WTC11 (cell line): ENCODE measurements at regions of chr7 and their contacts with region 1.

Region 1: GRCh38 chr7:142782922-142783900 is 12.4 kb downstream of the PRSS2 start:
- DNase-seq: peak; percentile 91
- ATAC-seq: peak; percentile 82
- H3K4me3 Mint-ChIP-seq: peak overlapping the region; percentile 66
- H3K27ac Mint-ChIP-seq: no peak overlapping the region
- H3K4me1 Mint-ChIP-seq: peaks cover 7% of the 10 kb centered on the region
- H3K27me3 Mint-ChIP-seq: 0 out of 2 replicates have a peak, but pooled peaks cover 6% of the 10 kb centered on the region
- CTCF ChIP-seq: peak; percentile 93

Region 2: GRCh38 chr7:142535123-142535779 is 248.0 kb before region 1 on chr7:
- CTCF ChIA-PET with region 1: interaction called, 25 read pairs
- POLR2A ChIA-PET with region 1: interaction called, 3 read pairs
- DNase-seq: peak; percentile 86
- ATAC-seq: peak; percentile 100
- H3K4me3 Mint-ChIP-seq: peak overlapping the region; percentile 42; the same call in 1 of the 2 replicates
- H3K27ac Mint-ChIP-seq: 0 out of 2 replicates have a peak overlapping the region, but pooled peaks have one; percentile 42
- H3K4me1 Mint-ChIP-seq: peaks cover 4% of the 10 kb centered on the region
- H3K27me3 Mint-ChIP-seq: peaks cover 5% of the 10 kb centered on the region; the same call in 1 of the 2 replicates
- CTCF ChIP-seq: peak; percentile 70

Region 3: GRCh38 chr7:142632291-142633134 is 150.7 kb before region 1 on chr7:
- CTCF ChIA-PET with region 1: interaction called, 174 read pairs
- POLR2A ChIA-PET with region 1: interaction called, 4 read pairs
- DNase-seq: peak; percentile 71
- ATAC-seq: peak; percentile 98
- H3K4me3 Mint-ChIP-seq: no peak overlapping the region
- H3K27ac Mint-ChIP-seq: no peak overlapping the region
- H3K4me1 Mint-ChIP-seq: peaks cover 2% of the 10 kb centered on the region; the same call in 1 of the 2 replicates
- H3K27me3 Mint-ChIP-seq: peaks cover 13% of the 10 kb centered on the region
- CTCF ChIP-seq: peak; percentile 63

Region 4: GRCh38 chr7:142669074-142669654 is 114.0 kb before region 1 on chr7:
- CTCF ChIA-PET with region 1: interaction called, 26 read pairs
- POLR2A ChIA-PET with region 1: no interaction called
- DNase-seq: no peak
- ATAC-seq: peak; percentile 65; the same call in 1 of the 2 replicates
- H3K4me3 Mint-ChIP-seq: no peak overlapping the region
- H3K27ac Mint-ChIP-seq: no peak overlapping the region
- H3K4me1 Mint-ChIP-seq: no peaks in the 10 kb centered on the region
- H3K27me3 Mint-ChIP-seq: no peaks in the 10 kb centered on the region
- CTCF ChIP-seq: peak; percentile 33; the same call in 1 of the 2 replicates

Region 5: GRCh38 chr7:142796608-142797385 is 13.6 kb after region 1 on chr7:
- CTCF ChIA-PET with region 1: interaction called, 36 read pairs
- POLR2A ChIA-PET with region 1: interaction called, 3 read pairs
- DNase-seq: peak; percentile 36
- ATAC-seq: peak; percentile 38
- H3K4me3 Mint-ChIP-seq: peak overlapping the region; percentile 86
- H3K27ac Mint-ChIP-seq: no peak overlapping the region
- H3K4me1 Mint-ChIP-seq: peaks cover 56% of the 10 kb centered on the region
- H3K27me3 Mint-ChIP-seq: peaks cover 82% of the 10 kb centered on the region
- CTCF ChIP-seq: no peak

Region 6: GRCh38 chr7:142866361-142867058 is 83.3 kb after region 1 on chr7:
- CTCF ChIA-PET with region 1: interaction called, 10 read pairs
- POLR2A ChIA-PET with region 1: no interaction called
- DNase-seq: peak; percentile 80
- ATAC-seq: peak; percentile 92
- H3K4me3 Mint-ChIP-seq: no peak overlapping the region
- H3K27ac Mint-ChIP-seq: no peak overlapping the region
- H3K4me1 Mint-ChIP-seq: peaks cover 39% of the 10 kb centered on the region
- H3K27me3 Mint-ChIP-seq: no peaks in the 10 kb centered on the region; the same call in none of the 2 replicates
- CTCF ChIP-seq: peak; percentile 39; the same call in 1 of the 2 replicates